A549 (cell line): ENCODE measurements at regions of chr1 and their contacts with region 1.

Region 1: GRCh38 chr1:33111970-33112369 is 31.0 kb downstream of the AZIN2 start:
- DNase-seq: peak in 1 of 2 experiments; percentile 32
- ATAC-seq: peak in 1 of 2 experiments; percentile 49; a peak in 1 of 6 replicates
- H3K4me3 ChIP-seq: no peak overlapping the region
- H3K27ac ChIP-seq: no peak overlapping the region
- H3K4me1 ChIP-seq: no peaks in the 10 kb centered on the region
- CTCF ChIP-seq: peak; percentile 21; the same call in 1 of the 3 replicates
- EP300 ChIP-seq: no peak
- POLR2A ChIP-seq: no peak
- RAD21 ChIP-seq: peak; percentile 19 to 35; a peak in 2 of 5 replicates

Region 2: GRCh38 chr1:33036526-33037503 is 75.2 kb before region 1 on chr1 and contains the start of gene AK2:
- CTCF ChIA-PET with region 1: no interaction called
- POLR2A ChIA-PET with region 1: no interaction called
- DNase-seq: peak; percentile 98
- ATAC-seq: peak; percentile 100
- H3K4me3 ChIP-seq: peak within 1 kb of the TSS; percentile 72
- H3K27ac ChIP-seq: peak within 1 kb of the TSS; percentile 84 to 90
- H3K4me1 ChIP-seq: peaks cover 18% of the 10 kb centered on the region
- CTCF ChIP-seq: no peak
- EP300 ChIP-seq: no peak
- POLR2A ChIP-seq: peak; percentile 61
- RAD21 ChIP-seq: no peak
- polyA plus RNA-seq, gene AK2: 148 and 164 TPM in 2 replicates

Region 3: DNA sequence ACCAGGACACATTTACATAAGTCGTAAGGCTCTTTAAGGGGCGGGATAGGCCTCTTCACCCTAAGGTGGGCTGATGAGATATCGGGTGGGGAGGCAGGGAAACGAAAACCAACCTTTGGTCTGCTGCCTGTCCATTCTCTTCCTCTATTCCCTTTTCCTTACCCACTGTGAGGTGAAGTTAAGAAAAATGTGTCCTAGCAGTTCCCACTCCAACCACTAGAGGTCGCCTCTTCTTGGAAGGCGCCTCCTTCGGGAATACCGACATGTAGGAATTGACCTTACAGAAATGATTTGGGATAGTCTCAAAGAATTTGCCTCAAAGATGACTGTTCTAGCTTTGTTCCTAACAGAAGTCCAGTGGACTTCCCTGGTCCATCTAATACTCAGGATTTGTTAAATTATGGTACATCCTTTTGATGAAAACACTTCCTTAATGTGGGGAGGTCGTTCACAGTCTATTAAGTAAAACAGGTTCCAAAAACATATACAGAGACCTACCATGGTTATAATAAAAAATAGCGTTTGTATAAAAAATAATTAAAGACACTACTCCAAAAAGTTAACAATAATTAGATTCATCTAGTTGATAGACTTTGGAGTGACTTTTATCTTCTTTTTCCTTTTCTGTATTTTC is 16.9 kb before region 1 on chr1:
- CTCF ChIA-PET with region 1: interaction called, 11 read pairs
- POLR2A ChIA-PET with region 1: no interaction called
- DNase-seq: peak; percentile 48 to 65
- ATAC-seq: peak; percentile 79 to 87; a peak in 5 of 6 replicates
- H3K4me3 ChIP-seq: no peak overlapping the region
- H3K27ac ChIP-seq: no peak overlapping the region
- H3K4me1 ChIP-seq: no peaks in the 10 kb centered on the region
- CTCF ChIP-seq: peak; percentile 73
- EP300 ChIP-seq: no peak
- POLR2A ChIP-seq: no peak
- RAD21 ChIP-seq: peak; percentile 30 to 55; a peak in 4 of 5 replicates